Activated CD8-positive, alpha-beta T cell treated with anti-CD3 and anti-CD28 coated beads for 36 hours (primary cell): ENCODE measurements at regions of chr1 and their contacts with region 1.

Region 1: DNA sequence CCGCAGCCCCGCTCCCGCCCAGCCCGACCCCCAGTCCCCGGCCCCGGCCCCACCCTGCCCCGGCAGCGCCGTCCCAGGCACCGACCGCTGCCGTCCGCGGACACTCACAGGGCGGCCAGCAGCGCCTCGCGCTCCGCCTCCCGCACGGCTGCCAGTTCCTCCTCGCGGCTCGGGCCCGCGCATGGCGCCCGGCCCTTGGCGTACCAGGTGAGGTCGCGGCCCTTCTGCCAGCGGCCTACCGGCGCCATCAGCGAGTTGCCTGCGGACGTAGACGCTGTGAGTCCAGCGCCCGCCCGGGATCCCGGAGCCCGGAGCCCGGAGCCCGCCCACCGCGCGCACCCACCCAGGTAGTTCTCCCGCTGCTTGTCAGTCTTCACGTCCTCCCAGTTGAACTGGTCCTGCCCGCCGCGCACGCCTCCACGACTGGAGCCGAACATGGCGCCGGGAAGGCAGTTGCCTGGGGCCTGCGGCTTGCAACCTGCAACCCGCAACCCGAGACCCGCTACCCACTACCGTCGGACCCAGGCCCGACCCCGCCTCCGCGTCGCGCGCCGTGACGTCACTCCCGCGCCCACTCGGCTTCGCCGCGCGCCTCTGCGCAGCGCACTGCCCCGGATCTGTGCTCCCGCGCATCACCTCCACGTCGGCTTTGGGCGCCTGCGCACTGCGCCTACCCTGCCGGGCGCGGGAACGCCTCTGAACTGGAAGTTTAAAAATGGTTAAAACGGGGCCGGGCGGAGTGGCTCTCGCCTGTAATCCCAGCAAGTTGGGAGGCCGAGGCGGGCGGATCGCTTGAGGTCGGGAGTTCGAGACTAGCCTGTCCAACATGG is at the start of gene C1orf35:
- DNase-seq: peak; percentile 95
- ATAC-seq: peak; percentile 89
- H3K4me3 Mint-ChIP-seq: peak within 1 kb of the TSS; percentile 91
- H3K27ac Mint-ChIP-seq: peak within 1 kb of the TSS; percentile 91
- H3K4me1 Mint-ChIP-seq: peaks cover 22% of the 10 kb centered on the region
- H3K27me3 Mint-ChIP-seq: no peaks in the 10 kb centered on the region
- CTCF ChIP-seq: no peak
- total RNA-seq, gene C1orf35: 22.2 to 23.5 TPM

Region 2: DNA sequence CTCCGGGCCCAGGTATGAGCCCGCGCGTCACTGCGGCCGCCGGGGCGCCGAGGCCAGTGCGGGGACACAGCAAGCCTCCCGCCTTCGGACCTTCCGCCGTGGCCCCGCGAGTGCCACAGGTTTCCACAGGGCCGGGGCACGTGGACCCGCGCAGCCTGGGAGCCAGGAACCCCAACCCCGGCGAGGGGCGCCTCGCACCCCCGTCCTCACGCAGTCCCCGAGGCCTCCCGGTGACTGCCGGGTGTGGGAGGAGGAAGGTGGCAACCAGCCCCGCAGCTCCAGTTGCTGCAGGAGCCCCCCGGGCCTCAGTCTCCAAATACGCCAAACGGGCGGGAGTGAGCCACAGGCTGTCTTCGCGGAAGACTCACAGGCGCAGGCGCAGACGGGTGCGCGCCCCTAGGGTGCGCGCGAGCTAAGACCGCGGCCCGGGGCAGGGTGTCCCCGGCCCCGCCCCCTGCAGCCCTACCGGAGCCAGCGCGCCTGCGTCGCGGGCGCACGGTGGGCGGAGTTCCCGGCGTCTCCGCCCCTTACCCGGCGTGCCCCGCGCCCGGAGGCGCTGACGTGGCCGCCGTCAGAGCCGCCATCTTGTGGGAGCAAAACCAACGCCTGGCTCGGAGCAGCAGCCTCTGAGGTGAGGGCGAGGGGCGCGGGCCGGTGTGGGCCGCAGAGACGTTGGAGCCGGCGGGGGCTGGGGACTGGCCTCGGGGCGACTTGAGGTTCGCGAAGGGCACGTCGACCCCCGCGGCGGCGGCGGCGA is 20.7 kb before region 1 on chr1 and contains the start of gene ARF1:
- CTCF ChIA-PET with region 1: interaction called, 3 read pairs
- POLR2A ChIA-PET with region 1: interaction called, 34 read pairs
- intact Hi-C with region 1: no loop called
- DNase-seq: peak; percentile 91
- ATAC-seq: peak; percentile 94
- H3K4me3 Mint-ChIP-seq: peak within 1 kb of the TSS; percentile 97
- H3K27ac Mint-ChIP-seq: peak within 1 kb of the TSS; percentile 97
- H3K4me1 Mint-ChIP-seq: peaks cover 37% of the 10 kb centered on the region
- H3K27me3 Mint-ChIP-seq: no peaks in the 10 kb centered on the region
- CTCF ChIP-seq: no peak
- total RNA-seq, gene ARF1: 349 to 350 TPM

Region 3: GRCh38 chr1:228090613-228091081 is 12.4 kb before region 1 on chr1:
- CTCF ChIA-PET with region 1: interaction called, 3 read pairs
- POLR2A ChIA-PET with region 1: interaction called, 51 read pairs
- intact Hi-C with region 1: no loop called
- DNase-seq: peak; percentile 1
- ATAC-seq: no peak
- H3K4me3 Mint-ChIP-seq: peak overlapping the region; percentile 27
- H3K27ac Mint-ChIP-seq: peak overlapping the region; percentile 25
- H3K4me1 Mint-ChIP-seq: peaks cover 77% of the 10 kb centered on the region
- H3K27me3 Mint-ChIP-seq: no peaks in the 10 kb centered on the region
- CTCF ChIP-seq: no peak

Region 4: DNA sequence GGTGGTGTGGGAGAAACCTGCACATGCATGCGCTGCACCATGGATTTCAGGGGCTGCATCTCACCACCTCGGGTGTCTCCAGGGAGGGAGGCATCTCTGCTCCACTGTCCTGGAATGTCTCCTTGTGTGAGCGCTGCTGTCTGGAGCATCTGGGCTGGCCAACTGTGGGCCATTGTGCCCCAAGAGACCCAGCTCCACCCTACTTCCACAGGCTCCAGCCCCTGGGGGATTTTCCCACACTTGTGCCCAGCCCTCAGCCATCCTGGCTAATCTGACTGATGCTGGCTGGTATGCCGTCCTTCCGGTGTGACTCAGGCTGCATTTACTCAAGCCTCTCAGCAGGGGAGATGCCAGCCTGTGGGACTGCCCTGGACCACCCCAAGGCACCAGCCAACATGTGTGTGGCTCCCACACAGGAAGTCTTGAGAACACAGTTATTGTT is 241.6 kb after region 1 on chr1:
- CTCF ChIA-PET with region 1: no interaction called
- POLR2A ChIA-PET with region 1: no interaction called
- intact Hi-C with region 1: no loop called
- DNase-seq: no peak
- ATAC-seq: no peak
- H3K4me3 Mint-ChIP-seq: no peak overlapping the region
- H3K27ac Mint-ChIP-seq: no peak overlapping the region
- H3K4me1 Mint-ChIP-seq: no peaks in the 10 kb centered on the region
- H3K27me3 Mint-ChIP-seq: no peaks in the 10 kb centered on the region
- CTCF ChIP-seq: no peak